Activated CD4-positive, alpha-beta T cell treated with anti-CD3 and anti-CD28 coated beads, Interleukin-2, amount 10 ng/mL, durations not matched to agents 24 days and 14 days (primary cell): ENCODE measurements at regions of chr6 and their contacts with region 1.

Region 1: DNA sequence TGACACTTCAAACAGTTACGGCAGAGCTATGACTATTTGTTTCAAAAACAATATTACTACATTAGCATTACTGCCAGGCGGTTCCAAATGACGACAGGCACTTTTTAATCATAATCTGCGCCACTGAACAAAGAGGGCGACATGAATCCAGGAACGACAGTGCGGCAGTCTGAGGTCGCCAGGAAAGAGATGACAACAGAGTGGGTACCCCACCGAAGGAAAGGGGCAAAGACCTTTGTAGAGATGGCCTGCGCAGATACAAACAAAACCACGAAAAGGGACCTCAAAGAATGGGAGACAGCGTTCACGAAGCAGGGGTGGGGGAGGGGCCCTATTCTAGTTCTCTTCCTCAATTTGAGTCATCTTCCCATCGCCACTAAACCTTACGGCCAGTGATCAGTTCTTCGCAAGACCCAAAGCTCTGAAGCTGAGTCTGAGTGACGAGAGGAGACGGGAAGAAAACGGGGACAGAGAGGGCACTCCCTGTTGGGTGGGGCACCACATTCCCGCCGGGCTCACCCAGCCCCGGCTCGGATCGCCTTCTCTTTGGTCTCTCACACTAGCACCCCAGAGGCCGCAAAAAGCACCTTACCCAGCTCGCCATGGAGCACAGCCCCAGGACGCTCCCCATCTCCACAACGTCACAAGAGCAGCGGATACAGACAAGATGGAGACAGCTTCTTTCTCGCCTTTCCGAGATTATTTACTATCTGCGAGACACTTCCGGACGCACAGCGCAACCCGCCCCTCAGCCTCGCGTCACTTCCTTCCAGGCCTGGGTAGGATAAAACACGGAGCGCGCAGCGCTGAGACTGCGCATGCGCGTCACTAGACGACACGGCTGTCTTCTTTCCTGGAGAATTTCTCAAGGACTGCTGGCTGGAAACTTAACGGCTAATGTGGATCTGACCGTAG is at the start of gene SERINC1:
- DNase-seq: peak; percentile 97
- H3K4me3 Mint-ChIP-seq: peak within 1 kb of the TSS; percentile 99
- H3K27ac Mint-ChIP-seq: peak within 1 kb of the TSS; percentile 99
- H3K4me1 Mint-ChIP-seq: peaks cover 21% of the 10 kb centered on the region
- H3K27me3 Mint-ChIP-seq: no peaks in the 10 kb centered on the region
- total RNA-seq, gene SERINC1: 38.6 and 40.9 TPM in 2 replicates

Region 2: GRCh38 chr6:121334299-121335086 is 1136.9 kb before region 1 on chr6 and contains the start of gene TBC1D32:
- intact Hi-C with region 1: loop called (anchors 10 kb)
- DNase-seq: peak; percentile 96
- H3K4me3 Mint-ChIP-seq: peak within 1 kb of the TSS; percentile 91
- H3K27ac Mint-ChIP-seq: peak within 1 kb of the TSS; percentile 98
- H3K4me1 Mint-ChIP-seq: peaks cover 31% of the 10 kb centered on the region
- H3K27me3 Mint-ChIP-seq: peaks cover 3% of the 10 kb centered on the region
- total RNA-seq, gene TBC1D32: 7.6 and 8.1 TPM in 2 replicates

Region 3: DNA sequence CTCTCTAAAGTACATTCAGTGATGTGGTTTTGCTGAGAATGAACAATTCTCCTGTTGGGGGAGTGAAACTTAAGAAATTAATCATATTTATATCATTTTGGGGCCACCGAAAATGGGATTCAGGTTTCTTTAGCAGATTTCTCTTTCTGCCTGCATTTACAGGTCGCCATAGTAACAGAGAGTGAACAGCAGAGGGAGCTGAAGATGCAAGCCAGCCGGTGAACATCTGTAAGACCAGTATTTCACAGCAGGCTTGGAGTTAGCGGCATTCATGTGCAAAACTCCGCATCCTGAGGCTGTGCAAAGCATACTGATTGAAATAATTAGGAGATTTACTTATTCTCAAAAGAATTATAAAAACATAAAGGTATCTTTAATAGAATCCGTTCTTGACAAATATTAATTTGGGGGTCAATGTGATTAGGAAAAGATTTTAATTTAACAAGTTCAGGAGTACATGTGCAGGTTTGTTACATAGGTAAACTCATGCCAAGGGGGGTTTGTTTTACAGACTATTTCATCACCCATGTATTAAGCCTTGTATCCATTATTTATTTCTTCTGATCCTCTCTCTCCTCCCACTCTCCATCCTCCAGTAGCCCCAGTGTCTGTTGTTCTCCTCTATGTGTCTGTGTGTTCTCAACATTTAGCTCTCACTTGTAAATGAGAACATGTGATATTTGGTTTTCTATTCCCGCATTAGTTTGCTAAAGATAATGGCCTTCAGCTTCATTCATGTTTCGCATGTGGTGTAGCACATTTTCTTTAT is 89.7 kb before region 1 on chr6:
- intact Hi-C with region 1: loop called (anchors 1 kb)
- DNase-seq: peak; percentile 87
- H3K4me3 Mint-ChIP-seq: no peak overlapping the region
- H3K27ac Mint-ChIP-seq: no peak overlapping the region
- H3K4me1 Mint-ChIP-seq: peaks cover 2% of the 10 kb centered on the region
- H3K27me3 Mint-ChIP-seq: peaks cover 28% of the 10 kb centered on the region

Region 4: GRCh38 chr6:122530440-122531046 is 59.2 kb after region 1 on chr6:
- intact Hi-C with region 1: loop called (anchors 1 kb)
- DNase-seq: peak; percentile 88
- H3K4me3 Mint-ChIP-seq: no peak overlapping the region
- H3K27ac Mint-ChIP-seq: no peak overlapping the region
- H3K4me1 Mint-ChIP-seq: no peaks in the 10 kb centered on the region
- H3K27me3 Mint-ChIP-seq: peaks cover 25% of the 10 kb centered on the region

Region 5: DNA sequence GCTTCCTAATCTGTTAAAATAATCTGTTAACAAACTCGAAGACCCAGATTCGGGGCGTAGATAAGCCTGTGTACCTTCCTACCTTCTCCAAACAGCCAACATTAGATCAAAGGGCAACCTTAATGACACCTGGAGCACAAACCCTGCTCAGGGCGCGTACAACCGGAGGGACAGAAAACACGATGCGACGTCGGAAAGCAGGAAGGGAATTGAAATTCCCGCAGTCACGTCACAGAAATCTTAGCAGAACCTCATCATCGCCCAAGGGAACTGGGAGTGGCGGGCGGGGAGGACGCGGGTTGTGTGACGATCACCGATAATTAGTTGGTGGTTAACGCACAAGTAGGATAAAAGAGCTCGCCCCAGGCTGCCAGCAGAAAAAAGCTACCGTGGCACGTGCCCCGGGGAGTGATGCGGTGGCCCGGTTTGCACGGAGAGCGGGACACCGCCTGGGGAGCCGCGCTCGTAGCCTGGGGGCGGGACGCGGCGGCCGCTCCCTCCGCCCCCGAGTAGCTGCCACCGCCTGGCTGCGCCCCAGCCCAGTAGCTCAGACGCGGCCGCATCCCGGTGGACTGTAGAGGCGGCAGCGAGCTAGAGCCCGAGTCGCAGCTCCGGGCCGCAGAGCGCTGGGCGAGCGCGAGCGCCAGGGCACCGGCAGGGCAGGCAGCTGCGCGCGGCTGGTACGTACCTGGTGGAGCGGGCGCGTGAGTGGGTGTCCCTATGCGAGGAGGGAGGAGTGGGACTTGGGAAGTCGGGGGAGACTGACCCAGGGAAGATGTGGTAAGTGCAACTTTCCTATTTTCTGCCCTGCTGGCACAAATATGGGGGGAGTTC is 138.7 kb after region 1 on chr6 and contains the start of gene PKIB:
- intact Hi-C with region 1: loop called (anchors 1 kb)
- DNase-seq: peak; percentile 82
- H3K4me3 Mint-ChIP-seq: peak within 1 kb of the TSS; percentile 82
- H3K27ac Mint-ChIP-seq: peak within 1 kb of the TSS; percentile 0
- H3K4me1 Mint-ChIP-seq: peaks cover 14% of the 10 kb centered on the region
- H3K27me3 Mint-ChIP-seq: peaks cover 49% of the 10 kb centered on the region
- total RNA-seq, gene PKIB: not detected in 2 replicates

Region 6: GRCh38 chr6:122692131-122692598 is 220.8 kb after region 1 on chr6:
- intact Hi-C with region 1: no loop called
- DNase-seq: no peak
- H3K4me3 Mint-ChIP-seq: no peak overlapping the region
- H3K27ac Mint-ChIP-seq: no peak overlapping the region
- H3K4me1 Mint-ChIP-seq: no peaks in the 10 kb centered on the region
- H3K27me3 Mint-ChIP-seq: no peaks in the 10 kb centered on the region

Region 7: DNA sequence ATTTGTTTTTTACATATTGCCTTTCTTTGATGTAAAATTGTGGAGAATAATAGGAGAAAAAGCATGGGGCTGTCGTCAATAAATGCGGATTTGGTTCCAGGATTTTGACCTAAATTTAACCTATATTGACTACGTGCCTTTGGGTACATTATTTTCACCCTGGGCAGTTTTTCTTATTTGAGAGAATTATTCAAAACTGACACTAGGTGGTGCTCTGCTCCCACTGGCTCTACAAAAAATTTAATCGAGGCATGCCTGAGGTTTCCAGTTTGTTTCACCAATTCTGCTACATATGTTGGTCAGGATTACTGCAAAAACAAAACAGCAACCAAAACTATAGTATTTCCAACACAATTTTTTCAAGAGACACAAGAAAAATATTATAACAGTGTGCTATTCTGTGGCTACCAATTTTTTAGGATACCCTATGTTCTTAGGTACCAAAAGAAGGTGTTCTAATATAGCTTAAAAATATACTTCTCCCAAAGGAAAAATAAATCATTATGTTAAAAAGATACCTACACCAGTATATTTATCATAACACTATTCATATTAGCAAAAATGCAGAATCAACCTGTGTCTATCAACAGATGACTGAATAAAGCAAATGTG is 259.5 kb after region 1 on chr6:
- intact Hi-C with region 1: loop called (anchors 10 kb)
- DNase-seq: peak; percentile 61
- H3K4me3 Mint-ChIP-seq: no peak overlapping the region
- H3K27ac Mint-ChIP-seq: no peak overlapping the region
- H3K4me1 Mint-ChIP-seq: no peaks in the 10 kb centered on the region
- H3K27me3 Mint-ChIP-seq: peaks cover 19% of the 10 kb centered on the region